Posterior vena cava (tissue), 2 donors: ENCODE measurements at regions of chr5 and their contacts with region 1.

Region 1: DNA sequence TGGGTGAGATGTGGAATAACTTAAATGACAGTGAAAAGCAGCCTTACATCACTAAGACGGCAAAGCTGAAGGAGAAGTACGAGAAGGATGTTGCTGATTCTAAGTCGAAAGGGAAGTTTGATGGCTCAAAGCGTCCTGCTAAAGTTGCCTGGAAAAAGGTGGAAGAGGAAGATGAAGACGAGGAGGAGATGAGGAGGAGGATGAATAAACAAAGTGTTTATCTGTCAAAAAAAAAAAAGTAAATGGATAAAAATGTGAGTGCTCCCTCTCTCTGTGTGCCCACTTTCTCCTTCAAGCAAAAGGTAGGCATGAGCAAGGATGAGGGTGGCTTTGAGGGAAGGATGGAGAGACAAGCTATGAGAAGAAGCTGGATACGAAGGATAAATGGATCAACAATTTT is 4.2 kb upstream of the CANX start:
- DNase-seq: no peak

Region 2: GRCh38 chr5:178895651-178896571 is 798.6 kb before region 1 on chr5 and contains the start of gene ZFP2:
- intact Hi-C with region 1: no loop called
- DNase-seq: peak; percentile 86
- total RNA-seq, gene ZFP2: 2.3 TPM

Region 3: DNA sequence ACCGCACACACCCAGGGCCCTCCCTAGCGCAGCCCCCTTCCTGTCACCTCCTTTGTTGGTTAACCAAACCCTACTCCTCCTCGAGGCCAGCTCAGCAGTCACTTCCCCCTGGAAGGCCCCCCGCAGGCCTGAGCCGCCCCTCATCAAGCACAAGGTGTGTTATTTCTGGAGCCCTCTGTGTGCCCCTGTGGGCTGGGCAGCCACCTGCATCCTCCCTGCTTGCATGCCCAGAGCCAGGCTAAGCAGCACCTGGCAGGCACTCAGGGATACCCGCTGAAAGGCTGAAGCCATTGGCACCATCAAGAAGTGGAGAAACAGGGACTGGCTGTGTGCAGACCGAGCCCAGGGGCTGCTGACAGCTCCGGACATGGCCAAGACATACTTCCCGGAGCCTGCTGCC is 512.6 kb before region 1 on chr5:
- intact Hi-C with region 1: loop called in 1 of 2 experiments (anchors 5 kb)
- DNase-seq: no peak

Region 4: DNA sequence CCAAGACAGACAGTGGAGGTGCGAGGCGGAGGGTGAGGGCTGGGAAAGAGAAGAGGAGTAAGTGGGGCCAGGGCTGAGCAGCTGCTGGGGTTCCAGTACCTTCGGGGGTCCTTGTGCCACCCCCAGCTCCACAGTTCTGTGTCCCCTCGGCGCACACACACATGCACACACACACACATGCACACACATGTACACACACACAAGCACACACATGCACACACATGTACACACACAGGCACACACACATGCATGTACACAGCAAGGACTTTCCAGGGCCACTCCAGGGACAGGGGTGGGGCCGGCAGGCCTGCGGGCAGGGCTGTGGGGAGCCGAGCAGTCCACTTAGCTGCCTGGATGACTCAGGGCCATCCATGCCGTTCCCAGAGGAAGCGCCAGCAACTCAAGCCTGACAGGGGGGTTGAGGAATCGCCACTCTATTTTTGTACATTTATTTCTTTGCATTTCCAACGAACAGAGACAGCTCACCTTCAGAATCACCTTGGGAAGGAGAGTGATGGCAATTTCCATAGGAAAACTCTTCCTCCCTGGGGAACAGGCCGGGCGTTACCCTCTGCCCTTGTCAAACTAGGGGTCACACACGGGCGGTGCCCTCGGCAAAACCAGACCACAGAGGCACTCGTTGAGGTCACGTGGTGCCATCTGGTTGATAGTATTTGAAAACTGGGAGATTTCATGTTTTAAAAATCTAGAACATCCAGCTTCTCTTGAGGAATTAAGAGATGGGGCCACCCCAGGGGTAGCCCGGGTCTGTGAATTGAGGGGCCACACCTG is 485.0 kb before region 1 on chr5:
- intact Hi-C with region 1: no loop called
- DNase-seq: no peak

Region 5: GRCh38 chr5:180860887-180861822 is 1166.6 kb after region 1 on chr5 and contains the start of gene ZFP62:
- intact Hi-C with region 1: no loop called
- DNase-seq: peak; percentile 97
- total RNA-seq, gene ZFP62: 21.2 to 22.2 TPM